Activated naive CD4-positive, alpha-beta T cell treated with anti-CD3 and anti-CD28 coated beads, Interleukin-2, amount 10 ng/mL, durations not matched to agents 7 days and 5 days (primary cell): ENCODE measurements at regions of chr4 and their contacts with region 1.

Region 1: DNA sequence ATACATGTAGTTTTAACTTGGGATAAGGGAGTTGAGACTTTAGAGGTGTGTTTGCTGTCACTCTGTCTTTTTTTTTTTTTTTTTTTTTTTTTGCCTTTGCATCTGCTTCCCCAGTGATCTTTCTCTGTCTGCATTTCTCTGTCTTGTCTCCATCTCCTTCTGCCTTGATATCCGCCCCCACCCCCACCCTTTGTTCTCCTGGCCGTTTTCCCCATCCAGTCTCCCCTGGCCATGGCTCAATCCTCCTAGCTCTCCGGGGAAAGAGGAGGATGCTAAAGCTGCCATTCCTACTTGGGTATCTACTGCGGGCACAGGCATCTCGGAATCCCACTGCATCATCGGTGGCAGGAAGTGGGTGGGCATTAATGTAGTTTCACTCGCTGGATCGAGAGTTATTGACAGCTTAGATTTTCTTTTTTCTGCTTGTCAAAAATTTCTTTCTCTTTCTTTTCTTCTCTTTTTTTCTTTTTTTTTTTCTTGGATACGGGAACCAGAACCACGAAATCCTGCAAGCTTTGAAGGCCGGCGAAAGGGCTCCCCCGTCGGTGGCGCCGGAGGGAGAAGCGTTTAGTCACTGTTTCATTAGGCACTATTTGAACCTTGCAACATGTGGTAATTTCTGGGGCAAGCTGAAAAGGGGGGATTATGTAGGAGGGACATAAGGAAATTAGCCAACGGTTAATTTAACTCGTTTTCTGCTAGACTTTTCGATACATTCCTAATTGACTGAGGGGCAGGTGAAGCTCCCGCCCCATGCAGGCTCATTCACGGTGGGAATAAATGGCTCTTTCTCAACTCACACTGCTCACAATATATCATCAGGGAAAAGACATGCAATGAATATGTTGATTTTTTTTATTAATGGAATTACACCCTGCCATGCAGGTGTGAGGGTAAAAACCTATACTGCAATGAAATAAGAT is 8.2 kb downstream of the GSX2 start:
- DNase-seq: no peak
- H3K4me3 Mint-ChIP-seq: no peak overlapping the region
- H3K27ac Mint-ChIP-seq: no peak overlapping the region
- H3K4me1 Mint-ChIP-seq: peaks cover 17% of the 10 kb centered on the region
- H3K27me3 Mint-ChIP-seq: peaks cover 84% of the 10 kb centered on the region

Region 2: GRCh38 chr4:53929955-53930798 is 178.0 kb before region 1 on chr4:
- CTCF ChIA-PET with region 1: interaction called, 13 read pairs
- DNase-seq: peak; percentile 69
- H3K4me3 Mint-ChIP-seq: no peak overlapping the region
- H3K27ac Mint-ChIP-seq: no peak overlapping the region
- H3K4me1 Mint-ChIP-seq: no peaks in the 10 kb centered on the region
- H3K27me3 Mint-ChIP-seq: peaks cover 10% of the 10 kb centered on the region

Region 3: GRCh38 chr4:54015423-54016030 is 92.7 kb before region 1 on chr4:
- CTCF ChIA-PET with region 1: no interaction called
- DNase-seq: no peak
- H3K4me3 Mint-ChIP-seq: no peak overlapping the region
- H3K27ac Mint-ChIP-seq: no peak overlapping the region
- H3K4me1 Mint-ChIP-seq: no peaks in the 10 kb centered on the region
- H3K27me3 Mint-ChIP-seq: no peaks in the 10 kb centered on the region

Region 4: GRCh38 chr4:54118850-54119589 is 10.8 kb after region 1 on chr4:
- CTCF ChIA-PET with region 1: no interaction called
- DNase-seq: no peak
- H3K4me3 Mint-ChIP-seq: no peak overlapping the region
- H3K27ac Mint-ChIP-seq: no peak overlapping the region
- H3K4me1 Mint-ChIP-seq: no peaks in the 10 kb centered on the region
- H3K27me3 Mint-ChIP-seq: peaks cover 4% of the 10 kb centered on the region